ENCODE measurements at regions of chr7 and their contacts with region 1.

Region 1: GRCh38 chr7:150778738-150779301 is 21.3 kb downstream of the TMEM176B start:
- DNase-seq: no peak
- H3K4me3 ChIP-seq: no peak overlapping the region
- H3K27ac ChIP-seq: no peak overlapping the region
- H3K4me1 ChIP-seq: peaks cover 0 to 18% (median 7%) of the 10 kb centered on the region in 4 donors
- H3K27me3 ChIP-seq: no peaks in the 10 kb centered on the region
- CTCF ChIP-seq: peak; percentile 81 to 91 (median 82)
- EP300 ChIP-seq: no peak
- POLR2A ChIP-seq: no peak

Region 2: GRCh38 chr7:150876817-150877526 is 98.2 kb after region 1 on chr7:
- intact Hi-C with region 1: loop called (anchors 10 kb)
- DNase-seq: peak; percentile 90
- H3K4me3 ChIP-seq: peak overlapping the region in 1 of 4 donors; percentile 25
- H3K27ac ChIP-seq: peak overlapping the region in 1 of 4 donors; percentile 13
- H3K4me1 ChIP-seq: peaks cover 5 to 17% (median 13%) of the 10 kb centered on the region in 4 donors
- H3K27me3 ChIP-seq: no peaks in the 10 kb centered on the region
- CTCF ChIP-seq: peak in 2 of 3 experiments; percentile 23 to 43
- EP300 ChIP-seq: no peak
- POLR2A ChIP-seq: no peak

Region 3: DNA sequence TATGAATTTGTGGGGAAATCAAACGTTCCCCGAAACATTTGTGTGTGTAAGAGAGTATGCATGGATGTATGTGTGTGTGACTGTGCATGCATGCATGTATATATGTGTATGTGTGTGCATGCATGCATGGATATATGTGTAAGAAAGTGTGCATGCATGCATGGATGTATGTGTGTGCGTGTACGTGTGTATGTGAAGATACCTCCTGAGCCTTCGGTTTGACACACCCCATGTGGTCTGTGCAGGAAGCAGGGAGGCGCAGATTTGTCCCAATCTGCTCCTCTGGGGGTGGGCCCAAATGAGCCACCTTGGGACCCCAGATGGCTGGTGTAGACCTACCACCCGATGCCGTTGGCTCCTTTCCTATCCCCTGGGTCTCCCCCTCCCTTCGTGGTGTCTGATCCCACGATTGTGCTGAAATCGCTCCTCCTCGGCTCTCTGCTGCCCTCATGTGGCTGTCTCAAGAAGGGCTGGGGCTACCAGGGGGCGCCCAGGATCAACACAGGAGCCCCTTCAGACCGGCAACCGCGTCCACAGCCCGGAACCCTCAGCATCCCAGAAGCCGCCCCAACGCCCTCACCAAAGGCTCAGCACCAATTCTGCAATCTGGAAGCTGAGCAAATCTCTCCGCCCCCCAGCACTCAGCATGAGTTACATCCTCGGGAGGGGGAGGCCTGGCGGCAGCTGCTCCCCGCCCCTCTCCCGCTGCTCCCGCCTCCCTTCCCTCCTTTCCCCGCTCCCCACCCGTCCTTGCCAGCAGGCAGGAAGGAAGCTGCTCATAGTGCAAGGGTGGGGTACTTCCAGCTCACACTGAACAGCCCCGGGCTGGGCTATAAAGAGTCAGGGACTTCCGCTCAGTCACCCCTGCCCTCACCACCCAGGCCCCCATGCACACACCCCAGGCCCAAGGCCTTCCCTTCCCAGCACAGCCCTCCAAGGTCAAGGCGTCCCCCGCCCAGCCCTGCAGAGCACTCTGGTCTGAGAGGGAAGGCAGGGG is 209.7 kb after region 1 on chr7:
- intact Hi-C with region 1: loop called (anchors 10 kb)
- DNase-seq: no peak
- H3K4me3 ChIP-seq: peak overlapping the region in 2 of 4 donors; percentile 5 to 41
- H3K27ac ChIP-seq: peak overlapping the region in 2 of 4 donors; percentile 51 to 60
- H3K4me1 ChIP-seq: peaks cover 30 to 40% (median 36%) of the 10 kb centered on the region in 4 donors
- H3K27me3 ChIP-seq: peaks cover 0 to 5% (median 0%) of the 10 kb centered on the region in 4 donors
- CTCF ChIP-seq: peak; percentile 90 to 96 (median 92)
- EP300 ChIP-seq: no peak
- POLR2A ChIP-seq: no peak

Region 4: DNA sequence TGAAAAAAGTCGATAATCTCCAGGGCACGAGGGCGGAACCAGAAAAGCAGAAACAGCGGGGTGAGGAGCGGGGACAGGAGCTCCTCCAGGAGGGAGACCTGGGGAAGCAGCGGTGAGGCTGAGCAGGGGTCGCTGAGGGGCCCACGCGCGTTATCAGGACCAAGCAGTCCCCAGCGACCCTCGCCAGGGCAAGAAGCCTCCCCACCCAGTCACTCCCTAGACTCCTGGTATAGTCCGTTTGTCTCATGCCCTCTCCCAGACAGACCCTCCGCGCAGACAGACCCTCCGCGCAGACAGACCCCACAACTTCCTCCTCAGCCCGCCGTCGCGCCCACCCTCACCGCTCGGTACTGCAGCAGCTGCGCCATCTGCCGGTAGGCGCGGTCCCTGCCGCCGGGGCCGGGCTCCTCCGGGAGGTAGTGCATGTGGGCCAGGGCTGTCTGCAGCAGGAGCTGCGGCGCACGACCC is 239.2 kb after region 1 on chr7:
- intact Hi-C with region 1: loop called (anchors 10 kb)
- DNase-seq: no peak
- H3K4me3 ChIP-seq: peak overlapping the region; percentile 29 to 41 (median 35)
- H3K27ac ChIP-seq: no peak overlapping the region
- H3K4me1 ChIP-seq: peaks cover 31 to 34% (median 32%) of the 10 kb centered on the region in 4 donors
- H3K27me3 ChIP-seq: peaks cover 0 to 81% (median 37%) of the 10 kb centered on the region in 4 donors
- CTCF ChIP-seq: peak; percentile 80 to 95 (median 84)
- EP300 ChIP-seq: no peak
- POLR2A ChIP-seq: no peak